ENCODE measurements at regions of chr10 and their contacts with region 1.

Region 1: GRCh38 chr10:119608316-119609155 is 11.8 kb upstream of the TIAL1 start:
- DNase-seq: peak; percentile 63
- H3K27ac ChIP-seq: no peak overlapping the region
- CTCF ChIP-seq: peak; percentile 87

Region 2: DNA sequence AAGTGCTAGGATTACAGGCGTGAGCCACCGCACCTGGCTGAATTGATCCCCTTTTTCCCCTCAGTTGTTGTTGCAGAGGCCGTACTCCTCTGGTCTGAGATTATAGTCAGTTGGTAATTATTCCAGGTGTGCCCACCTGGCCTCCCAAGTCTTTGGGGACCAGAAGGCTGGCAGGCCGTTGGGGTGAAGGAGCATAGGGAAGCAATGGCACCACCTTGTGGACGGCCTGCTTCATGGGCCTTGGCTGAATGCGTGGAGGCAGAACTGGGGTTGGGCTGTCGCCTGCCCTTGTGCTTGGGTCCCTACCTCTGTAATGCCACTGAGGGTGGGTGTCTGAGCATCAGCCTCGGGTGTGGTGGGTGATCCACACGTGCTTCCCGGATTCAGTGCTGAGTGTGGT is 191.7 kb before region 1 on chr10:
- CTCF ChIA-PET with region 1: no interaction called
- POLR2A ChIA-PET with region 1: no interaction called
- DNase-seq: peak; percentile 87
- H3K27ac ChIP-seq: no peak overlapping the region
- CTCF ChIP-seq: peak; percentile 71

Region 3: GRCh38 chr10:119562097-119562496 is 46.4 kb before region 1 on chr10:
- CTCF ChIA-PET with region 1: no interaction called
- POLR2A ChIA-PET with region 1: no interaction called
- DNase-seq: no peak
- H3K27ac ChIP-seq: no peak overlapping the region
- CTCF ChIP-seq: no peak

Region 4: GRCh38 chr10:119596537-119597404 is 11.8 kb before region 1 on chr10 and contains the start of gene TIAL1:
- CTCF ChIA-PET with region 1: interaction called, 16 read pairs
- POLR2A ChIA-PET with region 1: no interaction called
- DNase-seq: peak; percentile 98
- H3K27ac ChIP-seq: peak within 1 kb of the TSS; percentile 97
- CTCF ChIP-seq: no peak

Region 5: GRCh38 chr10:119625570-119626280 is 17.2 kb after region 1 on chr10:
- CTCF ChIA-PET with region 1: interaction called, 7 read pairs
- POLR2A ChIA-PET with region 1: interaction called, 12 read pairs
- DNase-seq: no peak
- H3K27ac ChIP-seq: no peak overlapping the region
- CTCF ChIP-seq: no peak

Region 6: GRCh38 chr10:119859420-119860258 is 251.1 kb after region 1 on chr10:
- CTCF ChIA-PET with region 1: interaction called, 12 read pairs
- POLR2A ChIA-PET with region 1: no interaction called
- DNase-seq: peak; percentile 30
- H3K27ac ChIP-seq: no peak overlapping the region
- CTCF ChIP-seq: peak; percentile 71

Measured in RWPE1 (cell line).